ENCODE measurements at regions of chr17 and their contacts with region 1.

Region 1: DNA sequence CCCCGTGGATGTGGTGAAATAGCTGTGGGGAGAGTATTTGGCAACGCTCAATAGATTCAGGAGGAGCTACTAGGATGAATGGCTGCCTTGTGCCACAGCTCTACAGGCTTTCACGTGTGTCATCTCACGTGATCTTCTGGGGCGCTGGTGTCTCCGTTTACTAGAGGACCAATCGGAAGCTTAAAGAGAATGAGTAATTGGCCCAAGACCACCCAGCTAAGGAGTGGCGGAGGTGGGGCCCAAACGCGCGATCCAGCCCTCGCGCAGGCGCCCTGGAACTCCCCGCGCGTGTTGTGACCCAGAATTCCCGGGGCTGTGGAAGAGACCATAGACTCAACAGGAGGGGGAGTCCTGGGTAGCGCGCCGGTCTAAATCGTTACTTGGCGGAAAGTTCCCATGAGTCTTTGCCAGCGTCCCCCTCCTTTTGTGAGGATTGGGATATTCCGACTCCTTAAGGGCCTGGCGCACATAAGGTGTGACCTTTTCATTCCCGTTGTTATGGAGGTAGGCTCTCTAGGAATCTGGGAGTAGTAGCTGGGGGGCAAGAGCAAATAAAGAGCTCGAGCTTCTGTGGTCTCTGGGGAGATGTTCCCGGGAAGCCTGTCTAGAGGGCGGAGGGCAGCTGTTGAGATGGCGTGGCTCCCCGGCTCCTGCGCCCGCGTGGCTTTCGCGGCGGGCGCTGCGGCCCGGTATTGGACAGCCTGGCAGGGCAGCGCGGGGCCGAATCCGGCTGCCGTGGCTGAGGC is 23.4 kb downstream of the TRPV2 start:
- DNase-seq: peak; percentile 99
- H3K4me3 ChIP-seq: peak overlapping the region; percentile 87 to 98
- H3K27ac ChIP-seq: peak overlapping the region; percentile 76 to 88
- H3K4me1 ChIP-seq: peaks cover 25 to 30% of the 10 kb centered on the region in 2 experiments; a peak in 3 of 4 replicates
- H3K27me3 ChIP-seq: no peaks in the 10 kb centered on the region
- CTCF ChIP-seq: no peak
- EP300 ChIP-seq: peak in 1 of 2 experiments; percentile 65; a peak in 1 of 4 replicates
- RAD21 ChIP-seq: no peak

Region 2: DNA sequence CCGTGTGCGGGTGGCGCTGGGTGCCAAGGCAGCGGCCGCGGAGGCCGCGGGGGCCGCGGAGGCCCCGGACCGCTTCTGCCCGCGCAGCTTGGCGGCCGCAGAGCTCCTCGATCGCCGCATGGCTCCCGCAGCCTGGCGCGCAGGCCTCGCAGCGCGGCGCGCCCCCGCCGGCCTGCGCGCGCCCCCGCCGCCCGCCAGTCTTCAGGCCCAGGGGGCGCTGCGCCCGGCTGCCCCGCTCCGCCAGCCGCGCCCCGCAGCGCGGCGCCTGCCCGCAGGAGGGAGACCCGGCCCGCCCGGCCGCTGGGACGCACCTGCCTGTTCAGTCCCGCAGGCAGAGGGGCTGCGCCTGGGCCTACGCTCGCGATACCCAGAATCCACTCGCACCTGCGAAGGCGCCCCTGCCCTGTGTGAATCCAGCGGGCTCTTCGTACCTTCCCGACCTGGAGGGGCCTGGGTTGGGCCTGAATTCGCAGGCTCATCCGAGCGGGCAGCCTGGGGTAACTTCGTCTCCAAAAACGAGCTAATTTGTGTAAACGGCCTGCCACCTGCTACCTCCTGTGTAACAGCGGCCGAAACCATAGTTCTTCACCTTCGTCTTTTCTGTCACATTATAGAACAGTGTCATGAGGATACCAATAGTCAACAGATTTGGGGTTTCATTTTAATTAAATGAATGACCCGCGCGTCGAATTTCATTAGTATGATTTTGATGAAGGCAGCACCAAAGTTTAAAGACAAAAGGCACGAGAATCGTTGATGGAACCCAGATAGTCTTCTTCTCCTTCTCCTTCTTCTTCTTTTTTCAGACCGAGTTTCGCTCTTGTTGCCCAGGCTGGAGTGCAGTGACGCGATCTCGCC is 85.2 kb before region 1 on chr17 and contains the start of gene CENPV:
- CTCF ChIA-PET with region 1: interaction called, 3 read pairs
- POLR2A ChIA-PET with region 1: interaction called, 18 read pairs
- DNase-seq: peak; percentile 95
- H3K4me3 ChIP-seq: peak within 1 kb of the TSS; percentile 65 to 84
- H3K27ac ChIP-seq: peak within 1 kb of the TSS; percentile 79 to 80
- H3K4me1 ChIP-seq: no peaks in the 10 kb centered on the region; a peak in 2 of 4 replicates
- H3K27me3 ChIP-seq: no peaks in the 10 kb centered on the region
- CTCF ChIP-seq: peak; percentile 19
- EP300 ChIP-seq: no peak
- RAD21 ChIP-seq: no peak
- polyA plus RNA-seq, gene CENPV: 92.3 and 97.7 TPM in 2 replicates

Region 3: GRCh38 chr17:16380640-16381495 is 57.9 kb before region 1 on chr17 and contains the start of gene UBB:
- CTCF ChIA-PET with region 1: interaction called, 3 read pairs
- POLR2A ChIA-PET with region 1: interaction called, 17 read pairs
- DNase-seq: peak; percentile 95
- H3K4me3 ChIP-seq: peak within 1 kb of the TSS; percentile 78 to 99
- H3K27ac ChIP-seq: peak within 1 kb of the TSS; percentile 94 to 97
- H3K4me1 ChIP-seq: peaks cover 4 to 15% of the 10 kb centered on the region in 2 experiments; a peak in 2 of 4 replicates
- H3K27me3 ChIP-seq: no peaks in the 10 kb centered on the region
- CTCF ChIP-seq: peak; percentile 12; the same call in 1 of the 2 replicates
- EP300 ChIP-seq: peak; percentile 33 to 85; a peak in 3 of 4 replicates
- RAD21 ChIP-seq: no peak
- polyA plus RNA-seq, gene UBB: 2,465 and 2,693 TPM in 2 replicates

Region 4: DNA sequence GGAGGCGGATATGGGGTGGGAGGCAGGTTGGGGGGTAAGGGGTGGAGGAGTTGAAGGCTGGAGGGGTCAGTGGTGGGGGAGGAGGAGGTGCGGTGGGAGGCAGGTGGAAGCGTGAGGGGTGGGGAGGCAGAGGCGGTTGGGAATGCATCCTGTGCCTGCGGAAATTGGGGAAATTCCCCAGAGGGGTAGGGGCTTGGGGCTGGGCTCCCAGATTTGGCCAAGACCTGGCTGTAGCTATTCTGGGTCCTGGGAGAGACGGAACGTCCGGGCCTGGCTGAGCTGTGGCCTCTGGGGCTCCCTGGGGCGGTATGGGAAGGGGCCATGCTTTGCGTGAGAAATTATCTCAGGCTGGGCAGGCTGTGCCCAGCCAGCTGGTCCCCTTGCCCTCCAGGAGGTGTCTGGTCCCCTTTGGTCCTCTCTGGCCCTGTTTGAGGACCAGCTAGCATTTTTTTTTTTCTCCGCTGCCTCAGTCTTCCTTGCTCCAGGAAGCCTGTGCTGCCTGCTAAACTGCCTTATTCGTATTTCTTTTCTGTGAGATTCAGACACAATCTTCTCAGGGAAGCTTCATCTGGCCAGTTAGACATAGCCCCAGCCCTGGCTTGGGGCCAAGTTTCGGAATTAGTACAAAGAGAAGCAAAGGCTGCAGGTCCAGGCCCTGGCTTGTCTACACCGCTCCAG is 30.7 kb before region 1 on chr17:
- CTCF ChIA-PET with region 1: interaction called, 3 read pairs
- POLR2A ChIA-PET with region 1: interaction called, 19 read pairs
- DNase-seq: peak; percentile 76
- H3K4me3 ChIP-seq: peak overlapping the region in 1 of 2 experiments; percentile 20; a peak in 1 of 4 replicates
- H3K27ac ChIP-seq: peak overlapping the region; percentile 54 to 82
- H3K4me1 ChIP-seq: peaks cover 0 to 11% of the 10 kb centered on the region in 2 experiments; a peak in 1 of 4 replicates
- H3K27me3 ChIP-seq: no peaks in the 10 kb centered on the region
- CTCF ChIP-seq: no peak
- EP300 ChIP-seq: no peak
- RAD21 ChIP-seq: no peak

Region 5: DNA sequence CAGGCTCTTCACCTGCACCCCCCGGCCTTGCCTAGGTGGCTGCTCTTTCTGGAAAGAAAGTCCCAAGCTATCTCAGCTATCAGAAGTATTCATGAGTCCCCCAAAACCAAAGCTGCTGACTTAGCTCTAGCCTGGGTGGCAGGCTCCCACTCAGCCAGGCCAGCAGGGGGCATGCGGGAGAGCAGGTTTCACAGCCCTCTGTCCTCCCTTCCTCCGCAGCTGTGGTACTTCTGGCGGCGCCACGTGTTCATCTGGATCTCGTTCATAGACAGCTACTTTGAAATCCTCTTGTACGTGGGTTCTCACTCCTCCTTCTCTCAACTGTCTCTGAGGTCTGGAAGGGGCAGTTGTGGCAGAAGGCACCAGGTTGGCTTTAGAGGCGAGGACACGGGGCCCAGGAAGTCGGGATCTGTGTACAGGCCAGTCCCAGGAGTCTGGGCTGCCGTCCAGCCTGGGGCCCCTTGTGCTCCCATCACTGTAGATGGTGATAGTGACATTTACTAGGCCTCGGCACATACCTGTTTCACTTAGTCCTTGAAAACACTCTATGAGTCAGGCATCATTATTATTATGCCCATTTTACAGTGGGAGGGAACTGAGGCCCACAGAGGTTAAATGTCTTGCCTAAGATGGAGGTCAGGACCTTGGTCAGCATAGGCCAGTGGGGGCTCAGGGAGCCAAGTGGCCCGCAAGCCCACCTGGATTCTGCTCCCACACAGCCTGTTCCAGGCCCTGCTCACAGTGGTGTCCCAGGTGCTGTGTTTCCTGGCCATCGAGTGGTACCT is 10.4 kb before region 1 on chr17:
- CTCF ChIA-PET with region 1: interaction called, 7 read pairs
- POLR2A ChIA-PET with region 1: interaction called, 25 read pairs
- DNase-seq: peak; percentile 86
- H3K4me3 ChIP-seq: no peak overlapping the region; a peak in 1 of 4 replicates
- H3K27ac ChIP-seq: no peak overlapping the region; a peak in 1 of 4 replicates
- H3K4me1 ChIP-seq: peaks cover 0 to 2% of the 10 kb centered on the region in 2 experiments; a peak in 1 of 4 replicates
- H3K27me3 ChIP-seq: no peaks in the 10 kb centered on the region
- CTCF ChIP-seq: peak; percentile 65
- EP300 ChIP-seq: no peak
- RAD21 ChIP-seq: peak; percentile 57

Measured in SK-N-SH (cell line).